Activated T-helper 1 cell treated with anti-CD3 and anti-CD28 coated beads, Interleukin-12 subunit alpha, Interleukin-12 subunit beta, Interleukin-2, Interleukin-4 antibody, amounts not matched to agents 30 ng/mL and 10 ng/mL and 1 ng/mL, durations not matched to agents 14 hours and 24 hours and 36 hours (primary cell): ENCODE measurements at regions of chr16 and their contacts with region 1.

Region 1: GRCh38 chr16:21554795-21555585 is 44.4 kb upstream of the METTL9 start:
- DNase-seq: peak; percentile 92
- H3K4me3 Mint-ChIP-seq: peak overlapping the region; percentile 52
- H3K27ac Mint-ChIP-seq: peak overlapping the region; percentile 73
- H3K4me1 Mint-ChIP-seq: peaks cover 17% of the 10 kb centered on the region
- H3K27me3 Mint-ChIP-seq: peaks cover 7% of the 10 kb centered on the region

Region 2: GRCh38 chr16:20735490-20735889 is 819.5 kb before region 1 on chr16:
- intact Hi-C with region 1: no loop called
- DNase-seq: no peak
- H3K4me3 Mint-ChIP-seq: no peak overlapping the region
- H3K27ac Mint-ChIP-seq: no peak overlapping the region
- H3K4me1 Mint-ChIP-seq: peaks cover 8% of the 10 kb centered on the region
- H3K27me3 Mint-ChIP-seq: no peaks in the 10 kb centered on the region

Region 3: GRCh38 chr16:21158208-21159110 is 396.5 kb before region 1 on chr16 and contains the start of gene LDAF1:
- intact Hi-C with region 1: loop called (anchors 1 kb)
- DNase-seq: peak; percentile 75
- H3K4me3 Mint-ChIP-seq: peak within 1 kb of the TSS; percentile 92
- H3K27ac Mint-ChIP-seq: peak within 1 kb of the TSS; percentile 11
- H3K4me1 Mint-ChIP-seq: peaks cover 8% of the 10 kb centered on the region
- H3K27me3 Mint-ChIP-seq: no peaks in the 10 kb centered on the region
- total RNA-seq, gene LDAF1: 6.5 and 6.6 TPM in 2 replicates

Region 4: DNA sequence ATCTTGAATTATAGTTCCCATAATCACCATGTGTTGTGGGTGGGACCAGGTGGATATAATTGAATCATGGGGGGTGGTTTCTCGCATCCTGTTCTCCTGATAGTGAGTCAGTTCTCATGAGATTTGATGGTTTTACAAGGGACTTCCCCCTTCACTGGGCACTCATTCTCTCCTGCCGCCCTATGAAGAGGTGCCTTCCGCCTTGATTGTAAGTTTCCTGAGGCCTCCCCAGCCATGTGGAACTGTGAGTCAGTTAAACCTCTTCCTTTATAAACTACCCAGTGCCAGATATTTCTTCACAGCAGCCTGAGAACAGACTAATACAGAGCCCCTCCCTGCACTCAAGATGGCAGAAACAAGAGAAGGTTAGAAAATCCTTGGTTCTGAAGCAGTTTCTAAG is 370.2 kb before region 1 on chr16:
- intact Hi-C with region 1: loop called (anchors 1 kb)
- DNase-seq: no peak
- H3K4me3 Mint-ChIP-seq: no peak overlapping the region
- H3K27ac Mint-ChIP-seq: no peak overlapping the region
- H3K4me1 Mint-ChIP-seq: peaks cover 5% of the 10 kb centered on the region
- H3K27me3 Mint-ChIP-seq: peaks cover 5% of the 10 kb centered on the region

Region 5: DNA sequence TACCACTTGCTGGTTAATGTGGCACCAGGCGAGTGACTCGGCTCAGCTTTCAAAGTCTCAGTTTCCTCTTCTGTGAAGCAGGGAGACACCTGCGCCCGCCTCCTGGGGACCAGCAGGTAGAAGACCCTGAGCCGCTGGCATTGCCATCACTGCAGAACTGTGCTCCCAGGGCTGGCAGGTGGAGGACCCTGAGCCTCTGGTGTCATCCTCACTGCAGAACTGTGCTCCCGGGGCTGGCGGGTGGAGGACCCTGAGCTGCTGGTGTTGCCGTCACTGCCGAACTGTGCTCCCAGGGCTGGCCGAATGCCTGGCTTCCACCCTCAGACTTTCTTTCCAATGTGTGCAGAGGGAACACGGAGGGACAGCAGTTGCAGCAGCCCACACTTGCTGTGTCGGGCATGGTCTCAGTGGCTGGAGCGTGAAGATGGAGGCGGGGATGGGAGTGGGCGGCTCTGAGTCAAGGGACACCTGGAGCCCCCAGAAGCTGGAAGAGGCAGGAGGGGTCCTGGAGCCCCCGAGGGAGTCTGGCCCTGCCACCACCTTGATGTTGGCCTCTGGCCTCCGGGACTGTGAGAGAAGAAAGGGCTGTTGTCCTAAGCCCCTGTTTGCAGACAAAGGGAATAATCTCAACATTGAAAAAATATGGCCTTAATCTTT is 31.5 kb before region 1 on chr16:
- intact Hi-C with region 1: loop called (anchors 1 kb)
- DNase-seq: no peak
- H3K4me3 Mint-ChIP-seq: no peak overlapping the region
- H3K27ac Mint-ChIP-seq: no peak overlapping the region
- H3K4me1 Mint-ChIP-seq: peaks cover 6% of the 10 kb centered on the region
- H3K27me3 Mint-ChIP-seq: peaks cover 5% of the 10 kb centered on the region

Region 6: DNA sequence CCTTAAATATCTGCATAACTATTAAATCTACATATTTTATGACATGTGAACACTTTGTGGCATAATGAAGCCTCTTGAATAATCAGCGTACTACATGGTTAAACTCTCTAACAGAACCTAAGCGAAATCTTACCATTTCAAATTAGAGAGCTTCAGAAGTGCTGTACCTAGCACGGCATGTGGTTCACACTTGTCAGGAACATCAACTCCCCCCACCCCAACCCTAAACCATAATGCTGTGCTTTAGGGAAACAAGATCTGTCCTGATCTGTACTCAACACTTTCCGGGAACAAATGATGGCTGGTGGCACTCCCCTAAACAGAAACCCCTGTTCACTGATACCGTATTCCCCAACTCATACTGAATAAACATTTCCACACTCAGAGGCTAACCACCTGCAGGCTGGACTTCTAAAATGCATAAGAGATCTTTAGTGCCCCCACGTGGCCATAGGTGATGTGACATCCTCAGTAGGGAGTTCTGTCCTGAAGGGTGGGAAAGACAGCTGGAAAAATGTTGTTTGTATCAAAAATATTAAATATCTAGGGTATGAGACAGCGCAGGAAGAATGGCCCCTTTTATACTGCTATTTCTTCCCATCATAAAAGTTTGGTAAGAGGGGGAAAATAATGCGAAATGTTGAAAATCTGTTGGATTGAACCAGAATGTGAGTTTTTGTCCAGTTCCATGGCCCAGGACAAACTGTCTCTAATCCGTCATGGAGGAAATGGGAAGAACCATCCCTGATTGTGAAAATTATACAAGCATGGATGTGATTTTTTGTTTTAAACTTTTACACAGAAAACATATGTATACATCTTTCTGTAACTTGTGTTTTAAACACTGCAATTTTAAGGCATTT is 1505.7 kb after region 1 on chr16:
- intact Hi-C with region 1: loop called (anchors 10 kb)
- DNase-seq: peak; percentile 20
- H3K4me3 Mint-ChIP-seq: no peak overlapping the region
- H3K27ac Mint-ChIP-seq: no peak overlapping the region
- H3K4me1 Mint-ChIP-seq: peaks cover 6% of the 10 kb centered on the region
- H3K27me3 Mint-ChIP-seq: peaks cover 14% of the 10 kb centered on the region